ENCODE measurements at regions of chr11 and their contacts with region 1.

Region 1: DNA sequence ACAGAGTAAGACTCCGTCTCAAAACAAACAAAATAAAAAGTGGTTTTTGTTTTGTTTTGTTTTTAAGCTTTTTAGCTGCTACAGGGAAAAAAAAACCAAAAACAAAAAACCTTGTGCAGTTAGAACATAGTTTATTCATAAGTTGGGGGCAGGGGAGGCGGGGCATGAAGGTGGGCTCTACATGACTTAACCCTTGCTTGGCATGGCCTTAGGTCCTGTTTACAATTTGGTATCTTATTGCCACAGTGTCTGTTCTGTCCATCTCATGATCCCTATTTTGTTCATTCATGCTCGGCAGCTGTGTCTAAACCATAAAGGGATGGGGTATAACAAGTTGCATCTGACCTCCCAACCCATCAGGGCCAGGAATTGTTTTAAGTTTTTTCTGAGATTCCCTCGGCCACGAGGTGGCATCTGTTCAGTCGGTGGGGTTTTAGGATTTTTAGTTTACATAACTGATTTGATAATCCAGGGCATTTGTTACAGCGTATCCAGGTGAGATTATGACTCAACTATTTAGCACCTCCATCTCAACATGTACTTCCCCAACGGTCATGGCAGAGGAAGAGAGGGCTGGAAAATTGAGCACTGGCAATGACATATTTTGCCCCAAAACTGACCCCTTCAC is 6.9 kb downstream of the AP5B1 start:
- DNase-seq: no peak
- ATAC-seq: no peak
- H3K4me3 ChIP-seq: no peak overlapping the region
- H3K27ac ChIP-seq: no peak overlapping the region
- H3K4me1 ChIP-seq: peaks cover 11% of the 10 kb centered on the region
- H3K27me3 ChIP-seq: no peaks in the 10 kb centered on the region
- CTCF ChIP-seq: no peak

Region 2: DNA sequence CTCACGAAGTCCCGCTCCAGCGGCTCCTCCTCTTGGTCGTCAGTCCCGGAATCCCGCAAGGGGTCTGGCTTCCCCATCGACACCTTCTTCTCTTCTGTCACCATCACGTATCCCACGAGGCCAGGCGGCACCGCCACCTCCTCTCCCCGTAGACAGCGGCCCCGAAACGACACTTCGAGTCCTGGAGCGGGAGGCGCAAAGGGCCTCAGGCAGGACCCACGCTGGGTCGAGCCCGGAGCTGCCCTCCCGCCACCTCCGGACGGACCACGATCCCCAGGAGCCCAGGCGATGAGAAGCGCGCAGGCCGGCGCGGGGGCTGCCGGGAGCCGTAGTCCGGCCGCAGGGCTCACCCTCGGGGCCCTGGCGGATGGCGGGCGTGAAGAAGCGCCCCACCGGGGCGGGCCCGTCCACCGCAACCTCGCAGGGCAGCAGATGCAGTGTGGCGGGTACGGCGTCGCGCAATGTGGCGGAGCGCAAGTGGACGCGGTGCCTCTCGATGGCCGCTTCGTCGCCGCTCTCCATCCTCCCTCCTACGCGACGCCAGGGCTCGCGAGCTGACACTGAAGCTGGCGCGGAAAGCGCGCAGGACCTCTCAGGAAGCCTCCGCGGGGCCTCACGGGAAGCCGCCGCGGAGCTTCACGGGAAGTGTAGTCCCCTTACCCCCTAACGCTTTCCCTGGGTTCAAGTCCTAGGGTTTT is 53.5 kb before region 1 on chr11 and contains the start of gene RNASEH2C:
- CTCF ChIA-PET with region 1: interaction called, 26 read pairs
- POLR2A ChIA-PET with region 1: interaction called, 7 read pairs
- intact Hi-C with region 1: no loop called
- DNase-seq: peak; percentile 93
- ATAC-seq: peak; percentile 88
- H3K4me3 ChIP-seq: peak within 1 kb of the TSS; percentile 74
- H3K27ac ChIP-seq: no peak within 1 kb of the TSS
- H3K4me1 ChIP-seq: peaks cover 15% of the 10 kb centered on the region
- H3K27me3 ChIP-seq: no peaks in the 10 kb centered on the region
- CTCF ChIP-seq: no peak
- total RNA-seq, gene RNASEH2C: 96.2 and 172 TPM in 2 replicates

Region 3: GRCh38 chr11:67630228-67630942 is 1856.5 kb after region 1 on chr11:
- CTCF ChIA-PET with region 1: no interaction called
- POLR2A ChIA-PET with region 1: interaction called, 14 read pairs
- intact Hi-C with region 1: no loop called
- DNase-seq: peak; percentile 98
- ATAC-seq: peak; percentile 78
- H3K4me3 ChIP-seq: peak overlapping the region; percentile 92
- H3K27ac ChIP-seq: peak overlapping the region; percentile 48
- H3K4me1 ChIP-seq: peaks cover 18% of the 10 kb centered on the region
- H3K27me3 ChIP-seq: no peaks in the 10 kb centered on the region
- CTCF ChIP-seq: peak; percentile 87